ENCODE measurements at regions of chr11 and their contacts with region 1.

Region 1: DNA sequence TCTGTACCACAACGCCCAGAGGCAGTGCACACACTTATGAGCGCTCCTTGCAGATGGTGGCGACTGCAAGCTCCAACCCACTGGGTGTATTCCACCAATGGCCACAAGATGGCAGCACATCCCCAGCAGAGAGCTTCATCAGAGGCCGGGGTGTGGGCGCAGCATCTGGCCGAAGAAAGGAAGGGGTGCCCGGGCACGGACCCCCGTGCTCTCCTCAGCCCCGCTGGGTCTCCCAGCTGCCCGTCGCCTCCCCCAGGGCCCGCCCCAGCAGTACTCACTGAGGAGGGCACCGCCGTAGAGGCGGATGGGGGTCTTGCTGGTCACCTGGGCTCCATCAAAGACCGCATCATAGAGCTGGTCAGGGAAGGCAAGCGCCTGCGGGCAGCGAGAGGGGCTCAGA is 14.2 kb downstream of the TP53I11 start:
- DNase-seq: peak; percentile 92
- H3K4me3 Mint-ChIP-seq: no peak overlapping the region
- H3K27ac Mint-ChIP-seq: no peak overlapping the region
- H3K4me1 Mint-ChIP-seq: no peaks in the 10 kb centered on the region
- H3K27me3 Mint-ChIP-seq: no peaks in the 10 kb centered on the region

Region 2: DNA sequence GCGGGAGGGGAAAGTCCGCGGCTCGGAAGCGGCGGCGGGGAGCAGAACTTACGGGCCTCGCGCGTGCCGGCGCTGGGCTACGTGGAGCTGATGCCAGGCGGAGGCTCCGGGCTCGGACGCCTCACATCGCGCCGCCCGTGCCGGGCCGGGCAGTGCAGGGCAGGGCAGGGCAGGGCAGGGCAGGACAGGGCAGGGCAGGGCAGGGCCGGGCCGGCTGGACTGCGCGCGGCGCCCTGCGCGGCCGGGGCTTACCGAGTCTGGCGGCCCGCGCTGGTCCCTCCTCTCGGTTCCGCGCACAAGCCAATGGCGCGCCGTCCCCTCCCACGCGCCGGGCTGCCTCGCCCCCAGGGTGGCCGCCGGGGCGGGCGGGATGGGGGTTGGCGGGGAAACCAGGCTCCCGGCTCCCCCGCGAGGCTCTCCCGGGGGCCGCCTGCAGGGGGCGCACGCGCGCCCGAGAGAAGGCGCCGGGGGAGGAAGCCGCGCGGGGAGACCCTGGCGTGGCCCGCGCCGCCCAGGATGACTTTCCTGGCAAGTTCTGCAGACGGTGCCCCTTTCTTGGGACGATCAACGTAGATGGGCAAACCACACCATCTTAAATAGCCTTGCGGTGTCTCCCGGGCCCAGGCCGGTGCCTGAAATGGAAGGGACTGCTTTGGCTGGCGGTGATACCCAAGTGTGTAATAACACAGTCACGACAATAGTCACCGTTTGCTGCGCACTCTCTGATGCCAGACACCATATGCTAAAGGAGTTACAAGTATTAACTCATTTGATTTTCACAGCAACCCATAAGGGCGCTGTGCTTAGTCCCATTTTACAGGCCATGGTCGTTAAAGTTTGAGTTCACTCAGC is 14.3 kb after region 1 on chr11 and contains the start of gene TP53I11:
- CTCF ChIA-PET with region 1: interaction called, 16 read pairs
- intact Hi-C with region 1: no loop called
- DNase-seq: peak; percentile 71
- H3K4me3 Mint-ChIP-seq: peak within 1 kb of the TSS; percentile 73
- H3K27ac Mint-ChIP-seq: no peak within 1 kb of the TSS
- H3K4me1 Mint-ChIP-seq: peaks cover 8% of the 10 kb centered on the region
- H3K27me3 Mint-ChIP-seq: peaks cover 2% of the 10 kb centered on the region
- total RNA-seq, gene TP53I11: 10.3 to 14.0 TPM

Region 3: DNA sequence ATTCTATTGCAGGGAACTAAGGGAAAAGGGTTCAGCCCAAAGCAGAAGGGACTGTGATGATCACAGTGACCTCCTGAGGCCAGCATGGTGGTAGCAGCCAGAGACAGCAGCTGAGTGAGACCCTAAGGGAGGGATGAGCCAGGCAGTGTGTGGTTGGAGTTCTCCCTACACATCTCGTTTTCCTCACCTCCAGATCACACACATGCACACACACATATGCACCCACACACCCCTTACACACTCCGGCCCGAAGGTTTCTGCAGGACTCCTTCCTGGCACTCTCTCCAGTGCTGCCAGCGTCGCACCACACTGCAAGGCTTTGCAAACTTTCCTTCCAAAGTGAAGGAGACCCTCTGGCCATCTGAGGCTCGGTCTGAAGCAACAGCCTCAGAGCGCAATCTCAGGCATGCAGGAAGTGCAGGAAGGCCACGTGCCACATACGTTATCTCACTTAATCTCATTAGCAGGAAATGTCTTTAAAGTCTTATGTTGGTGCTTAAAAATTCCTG is 41.0 kb after region 1 on chr11:
- CTCF ChIA-PET with region 1: interaction called, 10 read pairs
- intact Hi-C with region 1: loop called (anchors 5 kb)
- DNase-seq: peak; percentile 26
- H3K4me3 Mint-ChIP-seq: no peak overlapping the region
- H3K27ac Mint-ChIP-seq: no peak overlapping the region
- H3K4me1 Mint-ChIP-seq: peaks cover 9% of the 10 kb centered on the region
- H3K27me3 Mint-ChIP-seq: no peaks in the 10 kb centered on the region

Region 4: DNA sequence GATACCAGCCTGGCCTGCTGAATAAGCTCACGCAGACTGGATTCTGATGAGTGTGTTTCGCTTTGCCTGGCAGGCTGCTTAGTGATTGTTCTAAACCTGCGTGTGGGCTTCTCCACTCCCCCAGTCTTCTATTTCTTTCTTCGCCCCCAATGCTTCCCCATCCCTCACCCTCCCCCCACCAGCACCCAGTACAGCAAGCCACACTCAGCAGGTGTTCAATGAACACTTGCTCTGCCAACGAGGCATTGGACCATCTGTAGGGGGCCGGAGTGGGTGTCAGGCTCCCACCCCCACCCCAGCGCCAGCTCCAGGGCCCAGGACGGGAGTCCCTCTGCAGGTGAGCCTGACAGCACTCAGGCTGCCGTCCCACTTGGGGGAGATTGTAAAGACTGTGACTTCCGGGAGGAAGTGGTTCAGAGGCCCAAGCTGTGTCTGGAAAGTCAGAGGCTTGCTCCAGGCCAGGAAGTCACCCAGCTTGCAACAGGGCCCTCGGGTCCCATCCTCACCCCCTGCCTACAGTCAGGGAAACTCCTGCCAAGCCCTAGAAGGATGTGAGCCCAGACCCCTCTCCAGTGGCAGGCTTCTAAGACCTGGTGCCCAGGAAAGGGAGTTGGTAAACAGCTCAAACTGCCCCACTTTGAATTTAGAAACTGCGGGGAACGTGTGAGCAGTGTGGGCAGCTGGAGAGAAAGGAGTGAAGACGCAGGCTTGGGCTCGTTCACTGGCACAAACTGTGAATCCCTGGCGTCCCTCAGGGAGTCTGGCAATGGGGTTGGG is 143.6 kb after region 1 on chr11:
- CTCF ChIA-PET with region 1: interaction called, 22 read pairs
- intact Hi-C with region 1: no loop called
- DNase-seq: peak; percentile 82
- H3K4me3 Mint-ChIP-seq: peak overlapping the region; percentile 33
- H3K27ac Mint-ChIP-seq: peak overlapping the region; percentile 86
- H3K4me1 Mint-ChIP-seq: peaks cover 40% of the 10 kb centered on the region
- H3K27me3 Mint-ChIP-seq: no peaks in the 10 kb centered on the region

Region 5: GRCh38 chr11:45110562-45110961 is 174.0 kb after region 1 on chr11:
- CTCF ChIA-PET with region 1: interaction called, 741 read pairs
- intact Hi-C with region 1: no loop called
- DNase-seq: peak; percentile 40
- H3K4me3 Mint-ChIP-seq: no peak overlapping the region
- H3K27ac Mint-ChIP-seq: no peak overlapping the region
- H3K4me1 Mint-ChIP-seq: no peaks in the 10 kb centered on the region
- H3K27me3 Mint-ChIP-seq: peaks cover 24% of the 10 kb centered on the region

Region 6: DNA sequence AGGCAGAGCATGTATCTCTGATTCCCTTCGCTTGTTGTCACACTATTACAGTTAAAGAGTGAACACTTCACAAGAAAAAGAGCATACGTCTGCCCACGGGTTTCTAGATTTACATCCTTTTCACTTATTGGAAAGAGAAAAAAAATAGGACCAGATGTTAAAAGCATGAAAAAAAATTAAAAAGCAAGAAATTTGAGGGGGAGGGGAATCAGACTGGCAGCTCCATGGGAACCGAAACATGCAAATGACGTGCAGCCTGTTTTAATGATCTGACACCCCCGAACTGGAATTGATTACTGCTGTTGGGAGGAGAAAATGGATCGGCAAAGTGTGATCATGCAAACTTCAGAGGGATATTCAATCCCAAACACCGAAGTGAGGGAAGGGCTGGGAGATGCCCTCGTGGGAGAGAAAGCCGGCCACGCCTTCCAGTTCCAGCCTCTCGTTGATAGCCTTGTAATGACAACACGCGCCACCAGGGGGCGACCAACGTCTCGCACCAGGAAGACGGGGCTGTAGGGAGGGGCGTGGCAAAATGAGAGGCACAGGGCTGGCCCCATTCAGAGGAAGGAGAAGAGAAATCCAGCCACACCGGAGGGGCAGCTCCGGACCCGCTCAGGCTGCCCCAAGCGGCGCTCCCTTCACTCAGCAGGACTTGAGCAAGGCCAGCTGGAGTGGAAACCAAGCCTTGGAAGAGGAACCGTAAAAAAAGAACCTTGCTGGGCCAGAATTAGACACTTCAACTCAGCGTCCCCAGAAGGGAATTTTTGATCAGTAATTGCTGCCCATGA is 403.4 kb after region 1 on chr11:
- CTCF ChIA-PET with region 1: interaction called, 3 read pairs
- intact Hi-C with region 1: loop called (anchors 10 kb)
- DNase-seq: peak; percentile 96
- H3K4me3 Mint-ChIP-seq: peak overlapping the region; percentile 53
- H3K27ac Mint-ChIP-seq: no peak overlapping the region
- H3K4me1 Mint-ChIP-seq: peaks cover 8% of the 10 kb centered on the region
- H3K27me3 Mint-ChIP-seq: peaks cover 3% of the 10 kb centered on the region

Measured in activated naive CD4-positive, alpha-beta T cell treated with anti-CD3 and anti-CD28 coated beads for 36 hours (primary cell).